Aorta (tissue), 5 donors: ENCODE measurements at regions of chrX and their contacts with region 1.

Region 1: GRCh38 chrX:48891402-48892288 is 5.9 kb downstream of the TIMM17B start:
- DNase-seq: peak; percentile 92 to 93
- ATAC-seq: peak; percentile 92
- H3K4me3 ChIP-seq: peak overlapping the region in 1 of 2 donors; percentile 55
- H3K27ac ChIP-seq: no peak overlapping the region
- H3K4me1 ChIP-seq: no peaks in the 10 kb centered on the region
- H3K27me3 ChIP-seq: no peaks in the 10 kb centered on the region

Region 2: DNA sequence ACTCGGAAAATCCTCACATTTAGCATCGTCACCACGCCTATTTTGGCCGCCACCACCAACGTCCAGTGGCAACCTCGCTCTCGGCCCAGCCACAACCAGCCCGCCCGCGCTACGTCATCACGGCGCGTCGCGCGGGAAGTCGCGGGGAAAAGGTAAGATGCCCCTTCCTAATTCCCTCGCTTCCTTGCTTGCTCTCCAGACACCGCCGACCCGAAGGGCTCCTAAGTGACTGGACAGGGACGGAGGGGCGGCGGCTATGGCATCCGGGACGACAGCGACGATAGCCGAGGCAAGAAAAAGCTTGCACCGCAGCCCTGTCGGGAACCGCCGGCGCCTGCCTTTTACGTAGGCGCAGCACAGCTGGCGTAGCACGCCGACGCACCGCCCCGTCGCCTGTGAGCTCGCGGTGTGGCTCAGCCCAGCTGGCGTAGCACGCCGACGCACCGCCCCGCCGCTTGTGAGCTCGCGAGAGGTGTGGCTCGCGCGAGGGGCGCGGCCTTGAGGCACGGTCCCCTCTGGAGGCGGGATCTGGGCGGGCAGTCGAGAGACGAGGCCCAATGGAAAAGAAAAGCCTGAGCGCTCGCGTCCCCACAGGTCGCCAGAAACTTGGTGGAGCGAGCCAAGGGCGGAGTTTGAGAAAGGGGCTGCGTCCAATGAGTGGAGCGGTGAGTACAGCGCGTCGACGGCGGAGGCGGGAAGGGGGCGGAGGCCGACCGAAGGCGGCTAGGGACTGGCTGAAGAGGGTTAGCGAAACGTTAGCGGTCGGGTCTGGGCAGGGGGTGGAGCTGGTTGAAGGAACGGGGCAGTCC is 90.2 kb before region 1 on chrX and contains the start of gene HDAC6:
- intact Hi-C with region 1: loop called in 1 of 2 experiments (anchors 2 kb)
- DNase-seq: peak; percentile 96 to 98
- ATAC-seq: peak; percentile 97
- H3K4me3 ChIP-seq: peak within 1 kb of the TSS; percentile 2 to 29
- H3K27ac ChIP-seq: peak within 1 kb of the TSS in 1 of 2 donors; percentile 81
- H3K4me1 ChIP-seq: no peaks in the 10 kb centered on the region
- H3K27me3 ChIP-seq: no peaks in the 10 kb centered on the region
- total RNA-seq, gene HDAC6: 77.6 to 89.4 TPM